Right cardiac atrium (tissue), 5 donors: ENCODE measurements at regions of chr16 and their contacts with region 1.

Region 1: GRCh38 chr16:8567750-8568617 is 22.3 kb downstream of the TMEM114 start:
- DNase-seq: peak; percentile 64 to 80 (median 70)
- ATAC-seq: peak; percentile 86 to 87
- H3K4me3 ChIP-seq: no peak overlapping the region
- H3K27ac ChIP-seq: no peak overlapping the region
- H3K4me1 ChIP-seq: no peaks in the 10 kb centered on the region
- H3K27me3 ChIP-seq: no peaks in the 10 kb centered on the region

Region 2: DNA sequence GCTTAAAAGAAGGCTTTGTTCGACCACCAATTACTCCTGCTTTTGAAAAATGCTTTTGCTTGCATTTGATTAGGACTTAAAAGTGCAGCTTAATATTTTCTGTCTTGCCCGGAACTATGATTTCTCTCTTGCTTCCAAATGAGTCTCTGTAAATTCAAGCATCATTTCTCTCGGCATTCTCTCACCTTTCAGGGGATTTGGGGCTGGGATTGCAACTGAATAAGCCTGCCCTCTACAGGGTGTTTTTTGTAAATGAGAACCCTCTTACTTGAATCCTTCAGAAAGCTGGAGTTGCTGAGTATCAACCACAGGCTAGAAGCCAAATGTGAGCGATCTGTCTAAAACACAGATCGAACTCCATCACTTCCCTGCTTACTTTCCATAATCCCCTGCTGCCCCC is 212.3 kb before region 1 on chr16:
- intact Hi-C with region 1: no loop called
- DNase-seq: no peak
- ATAC-seq: no peak
- H3K4me3 ChIP-seq: no peak overlapping the region
- H3K27ac ChIP-seq: no peak overlapping the region
- H3K4me1 ChIP-seq: no peaks in the 10 kb centered on the region
- H3K27me3 ChIP-seq: no peaks in the 10 kb centered on the region

Region 3: GRCh38 chr16:8426569-8426968 is 141.4 kb before region 1 on chr16:
- intact Hi-C with region 1: no loop called
- DNase-seq: no peak
- ATAC-seq: no peak
- H3K4me3 ChIP-seq: no peak overlapping the region
- H3K27ac ChIP-seq: no peak overlapping the region
- H3K4me1 ChIP-seq: no peaks in the 10 kb centered on the region
- H3K27me3 ChIP-seq: no peaks in the 10 kb centered on the region

Region 4: DNA sequence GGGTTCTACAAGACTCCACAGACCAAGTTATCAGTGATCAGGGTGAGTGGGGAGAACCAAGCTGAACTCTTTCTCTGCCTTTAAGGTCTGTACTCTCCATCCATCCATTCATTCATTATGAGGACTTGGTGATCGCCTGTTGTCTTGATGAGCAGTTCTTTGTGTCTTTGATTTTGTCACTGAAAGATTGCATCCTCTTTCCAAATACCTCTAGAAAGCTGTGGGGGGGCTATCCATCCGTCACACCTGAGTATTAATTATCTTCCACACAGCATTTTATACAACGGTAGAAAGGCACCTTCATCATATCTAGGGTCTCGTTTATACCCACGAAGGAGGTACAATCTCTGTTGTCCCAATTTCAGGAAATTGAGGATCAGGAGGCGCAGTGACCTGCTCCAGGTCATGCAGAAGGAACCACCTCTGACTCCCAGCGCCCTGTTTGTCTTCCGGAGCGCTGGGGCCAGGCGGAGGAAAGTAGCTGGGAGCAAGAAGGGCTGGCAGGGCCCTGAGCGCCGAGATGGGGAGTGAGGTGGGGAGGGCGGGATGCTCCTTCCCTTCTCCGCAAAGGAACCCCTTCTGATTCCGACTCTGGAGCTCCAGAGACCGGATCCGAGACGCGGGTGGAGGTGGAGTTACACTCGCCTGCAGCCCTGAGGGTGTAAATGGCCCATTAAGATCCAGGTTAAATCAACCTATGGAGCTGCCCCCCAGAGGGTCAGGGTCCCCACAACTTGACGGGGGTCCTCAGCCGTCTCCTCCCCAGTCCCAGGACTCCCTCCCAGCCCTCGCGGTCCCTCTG is 105.8 kb after region 1 on chr16:
- intact Hi-C with region 1: no loop called
- DNase-seq: no peak
- ATAC-seq: peak; percentile 65 to 68
- H3K4me3 ChIP-seq: peak overlapping the region; percentile 79
- H3K27ac ChIP-seq: no peak overlapping the region
- H3K4me1 ChIP-seq: no peaks in the 10 kb centered on the region
- H3K27me3 ChIP-seq: no peaks in the 10 kb centered on the region

Region 5: DNA sequence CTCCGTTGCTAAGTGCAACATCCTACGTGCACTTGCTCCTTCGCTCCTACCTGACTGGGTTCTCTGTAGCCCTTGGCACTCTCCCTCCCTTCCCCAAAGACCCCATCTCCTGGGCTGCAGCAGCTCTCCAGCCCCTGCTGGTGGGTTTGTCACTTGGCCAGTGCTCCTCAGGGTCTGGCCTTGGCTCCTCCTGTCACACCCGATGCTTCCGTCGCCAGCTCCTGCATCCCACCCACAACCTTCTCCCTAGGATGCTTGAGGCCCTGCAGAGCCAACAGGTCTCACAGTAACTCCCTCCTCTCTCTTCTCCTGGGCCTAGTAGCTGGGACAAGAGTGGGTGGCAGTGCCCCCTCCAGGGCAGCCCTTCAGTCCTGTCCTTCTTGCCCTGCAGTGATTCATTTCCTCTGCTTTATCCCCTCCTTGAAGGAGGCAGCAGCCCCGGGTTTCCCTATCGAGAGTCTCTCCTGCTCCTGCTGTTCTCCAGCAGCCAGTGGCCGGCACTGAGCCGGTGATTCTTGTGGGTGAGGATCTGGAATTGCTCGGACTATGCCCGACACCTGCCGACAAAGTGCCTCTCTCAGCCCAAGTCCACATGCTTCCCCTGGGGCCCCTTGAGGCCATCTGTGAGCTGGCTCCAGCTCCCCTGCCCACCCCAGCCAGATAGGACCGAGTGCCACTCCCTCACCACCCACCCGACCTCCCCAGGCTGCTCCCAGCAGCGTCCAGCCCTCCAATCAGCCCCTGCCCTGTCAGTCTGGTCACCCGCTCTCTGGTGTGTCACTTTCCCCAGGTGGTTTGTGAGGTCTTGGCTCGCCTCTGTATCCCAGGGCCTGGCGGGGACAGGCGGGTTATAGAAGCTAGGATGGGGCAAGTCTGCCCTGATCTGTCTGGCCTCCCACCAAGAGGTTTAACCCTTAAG is 317.9 kb after region 1 on chr16:
- intact Hi-C with region 1: loop called in 3 of 4 experiments (anchors 5 to 10 kb)
- DNase-seq: peak in 2 of 3 donors; percentile 60 to 63
- ATAC-seq: peak; percentile 22 to 32
- H3K4me3 ChIP-seq: no peak overlapping the region
- H3K27ac ChIP-seq: no peak overlapping the region
- H3K4me1 ChIP-seq: peaks cover 2% of the 10 kb centered on the region
- H3K27me3 ChIP-seq: no peaks in the 10 kb centered on the region